GM13977 (cell line): ENCODE measurements at regions of chr16 and their contacts with region 1.

Region 1: GRCh38 chr16:84484579-84485254 is 19.7 kb downstream of the MEAK7 start:
- DNase-seq: peak; percentile 58
- CTCF ChIP-seq: peak; percentile 38

Region 2: GRCh38 chr16:84277237-84277823 is 207.4 kb before region 1 on chr16:
- in situ Hi-C with region 1: loop called (anchors 25 kb)
- DNase-seq: peak; percentile 74
- CTCF ChIP-seq: peak; percentile 93